MCF 10A (cell line): ENCODE measurements at regions of chr1 and their contacts with region 1.

Region 1: DNA sequence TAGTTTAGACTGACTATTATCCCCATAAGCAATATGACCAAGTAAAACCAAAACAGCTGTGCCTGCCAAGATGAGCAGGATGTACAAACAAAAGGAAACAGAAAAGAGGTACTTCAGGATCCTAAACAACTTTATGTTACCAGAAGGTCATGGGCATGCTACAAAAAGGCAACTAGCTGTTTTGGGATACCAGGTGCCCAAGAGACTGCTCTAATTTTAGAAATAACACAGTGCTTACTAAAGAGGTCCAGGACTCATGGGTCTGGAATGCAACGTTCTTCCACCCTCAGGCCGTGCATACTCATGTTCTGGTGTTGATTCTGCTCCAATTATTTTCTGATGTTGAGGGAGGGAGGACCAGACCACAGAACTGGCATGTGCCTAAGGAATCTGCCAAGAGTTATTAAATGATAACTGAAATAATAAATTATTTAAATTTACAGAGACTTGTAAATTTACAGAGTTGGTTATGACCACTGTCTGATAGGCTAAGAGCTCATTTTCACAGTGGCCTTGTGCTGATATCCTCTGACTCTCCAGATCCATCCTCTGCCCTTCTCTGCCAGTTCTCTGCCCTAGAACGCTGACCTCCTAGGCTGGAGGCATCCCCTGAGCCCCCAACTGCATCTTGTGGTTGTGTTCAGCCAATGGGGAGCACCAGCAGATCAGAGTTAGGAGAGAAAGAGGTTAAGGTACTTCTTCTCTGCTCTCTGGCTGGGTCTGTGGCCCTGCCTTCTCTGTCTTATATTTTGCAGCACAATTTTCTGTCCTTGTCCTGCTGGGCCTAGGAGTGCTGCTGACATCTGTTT is 37.7 kb upstream of the BCL10 start:
- DNase-seq: peak; percentile 87
- H3K4me3 Mint-ChIP-seq: no peak overlapping the region
- H3K27ac Mint-ChIP-seq: peak overlapping the region; percentile 87
- H3K4me1 Mint-ChIP-seq: peaks cover 25% of the 10 kb centered on the region
- H3K27me3 Mint-ChIP-seq: no peaks in the 10 kb centered on the region
- CTCF ChIP-seq: no peak

Region 2: GRCh38 chr1:85188530-85188929 is 125.6 kb before region 1 on chr1:
- CTCF ChIA-PET with region 1: no interaction called
- POLR2A ChIA-PET with region 1: no interaction called
- intact Hi-C with region 1: no loop called
- DNase-seq: peak; percentile 46
- H3K4me3 Mint-ChIP-seq: no peak overlapping the region
- H3K27ac Mint-ChIP-seq: peak overlapping the region; percentile 63
- H3K4me1 Mint-ChIP-seq: peaks cover 5% of the 10 kb centered on the region
- H3K27me3 Mint-ChIP-seq: no peaks in the 10 kb centered on the region
- CTCF ChIP-seq: no peak

Region 3: DNA sequence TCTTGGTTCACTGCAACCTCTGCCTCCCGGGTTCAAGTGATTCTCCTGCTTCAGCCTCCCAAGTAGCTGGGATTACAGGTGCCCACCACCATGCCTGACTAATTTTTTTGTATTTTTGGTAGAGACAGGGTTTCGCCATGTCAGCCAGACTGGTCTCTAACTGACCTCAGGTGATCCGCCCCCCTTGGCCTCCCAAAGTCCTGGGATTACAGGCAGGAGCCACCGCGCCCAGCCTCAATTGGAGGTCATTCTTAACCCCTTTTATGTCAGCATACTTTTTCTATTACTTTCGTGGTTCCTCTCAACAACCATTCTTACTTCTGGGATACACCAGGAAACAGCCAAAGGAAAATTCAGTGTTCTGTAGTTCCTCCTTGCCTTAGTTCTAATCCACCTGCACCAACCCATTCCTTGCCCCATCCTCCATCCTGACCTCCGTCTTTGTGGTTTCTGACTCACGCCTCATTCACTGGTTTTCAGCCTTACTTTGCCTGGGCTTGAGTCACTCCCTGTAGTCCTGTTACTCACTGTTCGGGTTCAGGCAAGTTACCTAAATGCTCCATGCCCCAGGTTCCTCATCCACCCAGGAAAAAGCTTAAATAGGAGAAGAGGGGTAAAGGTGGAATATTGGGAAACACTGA is 24.8 kb before region 1 on chr1:
- CTCF ChIA-PET with region 1: no interaction called
- POLR2A ChIA-PET with region 1: interaction called, 11 read pairs
- intact Hi-C with region 1: no loop called
- DNase-seq: peak; percentile 98
- H3K4me3 Mint-ChIP-seq: peak overlapping the region; percentile 6
- H3K27ac Mint-ChIP-seq: peak overlapping the region; percentile 69
- H3K4me1 Mint-ChIP-seq: peaks cover 24% of the 10 kb centered on the region
- H3K27me3 Mint-ChIP-seq: no peaks in the 10 kb centered on the region
- CTCF ChIP-seq: no peak

Region 4: GRCh38 chr1:85330711-85331290 is 16.7 kb after region 1 on chr1:
- CTCF ChIA-PET with region 1: interaction called, 4 read pairs
- POLR2A ChIA-PET with region 1: interaction called, 10 read pairs
- intact Hi-C with region 1: no loop called
- DNase-seq: peak; percentile 78
- H3K4me3 Mint-ChIP-seq: peak overlapping the region; percentile 12
- H3K27ac Mint-ChIP-seq: peak overlapping the region; percentile 90
- H3K4me1 Mint-ChIP-seq: peaks cover 36% of the 10 kb centered on the region
- H3K27me3 Mint-ChIP-seq: no peaks in the 10 kb centered on the region
- CTCF ChIP-seq: no peak

Region 5: GRCh38 chr1:85351202-85351828 is 37.2 kb after region 1 on chr1:
- CTCF ChIA-PET with region 1: no interaction called
- POLR2A ChIA-PET with region 1: no interaction called
- intact Hi-C with region 1: no loop called
- DNase-seq: no peak
- H3K4me3 Mint-ChIP-seq: no peak overlapping the region
- H3K27ac Mint-ChIP-seq: no peak overlapping the region
- H3K4me1 Mint-ChIP-seq: no peaks in the 10 kb centered on the region
- H3K27me3 Mint-ChIP-seq: no peaks in the 10 kb centered on the region
- CTCF ChIP-seq: no peak

Region 6: DNA sequence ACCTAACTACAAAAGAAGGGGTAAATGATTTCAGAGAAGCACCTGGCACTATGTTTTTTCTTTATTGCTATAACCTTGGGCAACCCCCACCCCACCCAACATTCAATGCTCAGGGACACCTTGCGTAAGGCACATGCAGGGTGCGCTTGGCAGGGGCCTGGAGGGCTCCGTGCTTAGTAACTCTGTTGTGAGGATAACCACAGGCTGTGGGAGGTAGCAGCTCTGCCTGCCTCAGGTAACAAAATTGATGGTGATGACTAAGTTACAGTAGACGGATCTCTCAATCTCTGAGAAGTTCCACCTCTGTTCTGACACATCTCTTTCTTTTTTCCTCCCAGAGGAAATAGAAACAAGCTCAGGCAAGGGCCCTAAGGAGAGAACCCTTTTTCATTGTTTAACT is 257.7 kb after region 1 on chr1:
- CTCF ChIA-PET with region 1: no interaction called
- POLR2A ChIA-PET with region 1: no interaction called
- intact Hi-C with region 1: no loop called
- DNase-seq: peak; percentile 95
- H3K4me3 Mint-ChIP-seq: peak overlapping the region; percentile 23
- H3K27ac Mint-ChIP-seq: peak overlapping the region; percentile 69
- H3K4me1 Mint-ChIP-seq: peaks cover 55% of the 10 kb centered on the region
- H3K27me3 Mint-ChIP-seq: no peaks in the 10 kb centered on the region
- CTCF ChIP-seq: no peak

Region 7: DNA sequence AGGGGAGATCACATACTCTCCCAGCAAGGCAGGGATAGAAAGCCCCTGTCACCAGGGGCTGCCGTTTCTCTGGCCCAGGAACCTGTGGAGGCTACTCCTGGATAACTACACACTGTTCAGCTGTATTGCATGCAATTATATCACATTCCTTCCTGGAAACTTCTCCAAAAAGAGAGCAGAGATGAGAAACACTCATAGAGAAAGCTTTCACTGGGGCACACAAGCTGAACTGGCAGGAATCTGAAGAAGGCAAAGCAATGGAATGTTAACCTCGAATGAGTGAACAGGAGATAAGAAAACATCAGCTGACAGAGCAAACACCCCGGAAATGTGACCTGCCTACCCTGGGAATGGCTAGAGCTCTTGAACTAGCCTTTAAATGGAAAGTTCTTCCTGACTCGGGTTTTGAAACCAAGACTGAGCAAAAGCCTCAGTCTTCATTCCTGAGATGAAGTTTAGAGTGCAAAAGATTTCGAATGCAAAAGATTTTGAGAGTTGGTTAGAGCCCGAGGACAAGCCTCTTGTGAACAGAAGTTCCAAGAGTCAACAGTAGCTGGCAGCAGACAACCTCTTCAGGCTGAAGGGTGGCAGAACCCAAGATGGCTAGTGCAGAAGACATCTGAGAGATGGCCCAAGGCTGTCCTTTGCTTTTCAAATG is 298.7 kb after region 1 on chr1:
- CTCF ChIA-PET with region 1: no interaction called
- POLR2A ChIA-PET with region 1: no interaction called
- intact Hi-C with region 1: no loop called
- DNase-seq: peak; percentile 59
- H3K4me3 Mint-ChIP-seq: no peak overlapping the region
- H3K27ac Mint-ChIP-seq: peak overlapping the region; percentile 68
- H3K4me1 Mint-ChIP-seq: peaks cover 30% of the 10 kb centered on the region
- H3K27me3 Mint-ChIP-seq: no peaks in the 10 kb centered on the region
- CTCF ChIP-seq: peak; percentile 38